ENCODE measurements at regions of chr9 and their contacts with region 1.

Region 1: GRCh38 chr9:129962889-129963703 is 79.9 kb downstream of the FNBP1 start:
- DNase-seq: peak; percentile 58
- H3K4me3 Mint-ChIP-seq: peak overlapping the region; percentile 83
- H3K27ac Mint-ChIP-seq: peak overlapping the region; percentile 86
- H3K4me1 Mint-ChIP-seq: peaks cover 6% of the 10 kb centered on the region
- H3K27me3 Mint-ChIP-seq: no peaks in the 10 kb centered on the region
- CTCF ChIP-seq: no peak

Region 2: GRCh38 chr9:129726322-129727160 is 236.6 kb before region 1 on chr9:
- CTCF ChIA-PET with region 1: no interaction called
- POLR2A ChIA-PET with region 1: no interaction called
- intact Hi-C with region 1: no loop called
- DNase-seq: peak; percentile 79
- H3K4me3 Mint-ChIP-seq: no peak overlapping the region
- H3K27ac Mint-ChIP-seq: no peak overlapping the region
- H3K4me1 Mint-ChIP-seq: no peaks in the 10 kb centered on the region
- H3K27me3 Mint-ChIP-seq: no peaks in the 10 kb centered on the region
- CTCF ChIP-seq: peak; percentile 92

Region 3: DNA sequence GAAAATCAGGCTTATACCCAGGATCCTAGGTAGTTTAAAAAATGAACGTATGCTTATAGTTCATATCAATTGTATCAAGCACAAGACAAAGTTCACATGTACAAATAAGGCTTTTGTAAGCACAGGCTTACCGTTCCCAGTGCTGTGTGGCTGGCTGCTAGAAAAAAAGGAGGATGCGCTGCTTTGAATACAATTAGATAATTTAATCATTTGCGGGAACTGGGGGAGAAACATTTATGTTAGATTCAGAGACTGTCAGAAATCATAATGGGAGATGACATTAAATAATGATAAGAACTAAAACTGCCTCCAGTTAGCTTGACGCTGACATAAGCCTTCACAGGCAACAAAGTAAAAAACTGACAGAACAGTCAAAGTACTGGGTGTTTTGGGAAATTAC is 13.3 kb before region 1 on chr9:
- CTCF ChIA-PET with region 1: interaction called, 4 read pairs
- POLR2A ChIA-PET with region 1: interaction called, 11 read pairs
- intact Hi-C with region 1: no loop called
- DNase-seq: no peak
- H3K4me3 Mint-ChIP-seq: no peak overlapping the region
- H3K27ac Mint-ChIP-seq: no peak overlapping the region
- H3K4me1 Mint-ChIP-seq: no peaks in the 10 kb centered on the region
- H3K27me3 Mint-ChIP-seq: no peaks in the 10 kb centered on the region
- CTCF ChIP-seq: no peak

Region 4: DNA sequence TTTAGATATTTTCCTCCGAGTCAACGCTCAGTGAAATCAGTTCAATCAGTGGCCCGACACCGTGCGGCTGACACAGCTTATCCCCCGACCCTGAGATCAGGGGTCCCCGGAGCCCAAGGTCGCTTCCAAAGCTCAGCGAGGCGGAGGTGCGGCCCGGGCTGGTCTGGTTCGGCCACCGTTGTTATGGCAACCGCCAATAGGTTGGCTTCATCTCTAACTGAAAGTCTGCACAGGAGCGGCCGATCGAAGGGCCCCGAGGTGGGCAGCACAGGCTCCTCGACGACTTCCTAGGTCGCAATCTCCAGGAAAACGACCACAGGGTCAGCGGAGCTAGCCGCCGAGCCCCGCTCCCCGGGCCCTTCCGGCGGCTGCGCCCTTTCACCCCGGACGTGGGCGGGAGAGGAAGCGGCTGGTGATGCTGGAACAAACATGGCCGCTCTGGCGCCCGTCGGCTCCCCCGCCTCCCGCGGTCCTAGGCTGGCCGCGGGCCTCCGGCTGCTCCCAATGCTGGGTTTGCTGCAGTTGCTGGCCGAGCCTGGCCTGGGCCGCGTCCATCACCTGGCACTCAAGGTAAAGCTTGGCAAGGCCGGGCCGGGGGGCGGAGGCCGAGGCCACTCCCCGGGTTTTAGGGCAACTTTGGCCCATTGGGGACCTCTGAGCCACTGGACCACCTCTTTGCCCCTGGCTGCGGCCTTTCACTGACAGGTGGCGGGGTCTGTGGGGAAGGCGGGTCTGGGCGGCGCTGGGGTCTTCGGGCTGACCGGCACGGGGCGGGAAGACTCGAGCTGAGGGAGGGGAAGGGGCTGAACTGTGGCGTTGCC is 90.6 kb after region 1 on chr9 and contains the start of gene GPR107:
- CTCF ChIA-PET with region 1: interaction called, 3 read pairs
- POLR2A ChIA-PET with region 1: interaction called, 11 read pairs
- intact Hi-C with region 1: no loop called
- DNase-seq: peak; percentile 69
- H3K4me3 Mint-ChIP-seq: peak within 1 kb of the TSS; percentile 90
- H3K27ac Mint-ChIP-seq: peak within 1 kb of the TSS; percentile 91
- H3K4me1 Mint-ChIP-seq: no peaks in the 10 kb centered on the region
- H3K27me3 Mint-ChIP-seq: no peaks in the 10 kb centered on the region
- CTCF ChIP-seq: no peak
- total RNA-seq, gene GPR107: 32.9 and 41.8 TPM in 2 replicates

Measured in MCF 10A (cell line).